GM12878 (cell line): ENCODE measurements at regions of chr2 and their contacts with region 1.

Region 1: GRCh38 chr2:103252781-103253180 is 490.9 kb downstream of the TMEM182 start:
- DNase-seq: no peak
- ATAC-seq: no peak
- H3K4me3 ChIP-seq: no peak overlapping the region
- H3K27ac ChIP-seq: no peak overlapping the region
- H3K4me1 ChIP-seq: no peaks in the 10 kb centered on the region
- H3K27me3 ChIP-seq: no peaks in the 10 kb centered on the region
- CTCF ChIP-seq: no peak
- EP300 ChIP-seq: no peak
- POLR2A ChIP-seq: no peak
- RAD21 ChIP-seq: no peak

Region 2: DNA sequence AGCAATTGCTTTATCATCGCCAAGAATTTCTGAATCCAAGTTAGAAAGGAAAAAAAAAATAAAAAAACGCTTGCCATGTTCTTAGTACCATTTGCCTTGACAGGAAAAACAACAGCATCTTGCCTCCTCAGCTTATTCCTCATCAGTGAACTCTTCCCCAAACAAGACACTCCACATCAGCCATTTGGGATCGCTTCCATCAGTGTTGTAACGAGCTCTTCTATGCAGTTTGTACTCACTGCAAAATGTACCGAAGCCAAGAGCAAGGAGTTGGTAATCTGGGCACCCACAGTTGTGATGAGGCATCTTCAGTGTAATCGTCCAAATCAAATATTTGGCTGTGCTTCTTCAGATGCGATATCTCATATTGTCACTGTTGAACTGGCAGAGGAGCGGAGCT is 12.7 kb after region 1 on chr2:
- CTCF ChIA-PET with region 1: interaction called, 3 read pairs
- POLR2A ChIA-PET with region 1: no interaction called
- RAD21 ChIA-PET with region 1: no interaction called
- SMC1A ChIA-PET with region 1: no interaction called
- in situ Hi-C with region 1: no loop called
- intact Hi-C with region 1: loop called (anchors 1 kb)
- DNase-seq: no peak
- ATAC-seq: no peak
- H3K4me3 ChIP-seq: no peak overlapping the region
- H3K27ac ChIP-seq: no peak overlapping the region
- H3K4me1 ChIP-seq: no peaks in the 10 kb centered on the region
- H3K27me3 ChIP-seq: no peaks in the 10 kb centered on the region
- CTCF ChIP-seq: no peak
- EP300 ChIP-seq: no peak
- POLR2A ChIP-seq: no peak
- RAD21 ChIP-seq: no peak

Region 3: DNA sequence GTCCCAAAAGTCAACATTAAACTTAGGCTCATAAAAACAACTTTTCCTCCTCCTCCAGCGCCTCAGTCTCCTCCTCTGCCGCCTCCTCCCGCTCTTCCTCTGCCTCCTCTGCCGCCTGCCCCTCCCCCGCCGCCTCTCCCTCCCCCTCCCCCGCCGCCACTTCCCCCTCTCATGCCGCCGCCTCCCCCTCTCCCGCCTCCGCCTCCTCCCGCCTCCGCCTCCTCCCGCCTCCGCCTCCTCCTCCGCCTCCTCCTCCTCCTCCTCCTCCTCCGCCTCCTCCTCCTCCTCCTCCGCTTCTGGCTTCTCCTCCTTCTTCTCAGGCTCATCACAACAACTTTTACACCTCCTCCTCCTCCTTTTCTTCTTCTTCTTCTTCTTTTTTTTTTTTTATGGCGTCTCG is 108.9 kb after region 1 on chr2:
- CTCF ChIA-PET with region 1: no interaction called
- POLR2A ChIA-PET with region 1: no interaction called
- RAD21 ChIA-PET with region 1: no interaction called
- SMC1A ChIA-PET with region 1: no interaction called
- in situ Hi-C with region 1: no loop called
- intact Hi-C with region 1: no loop called
- DNase-seq: no peak
- ATAC-seq: no peak
- H3K4me3 ChIP-seq: no peak overlapping the region
- H3K27ac ChIP-seq: no peak overlapping the region
- H3K4me1 ChIP-seq: no peaks in the 10 kb centered on the region
- H3K27me3 ChIP-seq: no peaks in the 10 kb centered on the region
- CTCF ChIP-seq: no peak
- EP300 ChIP-seq: no peak
- POLR2A ChIP-seq: no peak
- RAD21 ChIP-seq: no peak

Region 4: GRCh38 chr2:103410218-103410617 is 157.4 kb after region 1 on chr2:
- CTCF ChIA-PET with region 1: no interaction called
- POLR2A ChIA-PET with region 1: no interaction called
- RAD21 ChIA-PET with region 1: no interaction called
- SMC1A ChIA-PET with region 1: no interaction called
- in situ Hi-C with region 1: no loop called
- intact Hi-C with region 1: no loop called
- DNase-seq: no peak
- ATAC-seq: no peak
- H3K4me3 ChIP-seq: no peak overlapping the region
- H3K27ac ChIP-seq: no peak overlapping the region
- H3K4me1 ChIP-seq: no peaks in the 10 kb centered on the region
- H3K27me3 ChIP-seq: no peaks in the 10 kb centered on the region
- CTCF ChIP-seq: no peak
- EP300 ChIP-seq: no peak
- POLR2A ChIP-seq: no peak
- RAD21 ChIP-seq: no peak